Mammary epithelial cell (primary cell): ENCODE measurements at regions of chr3 and their contacts with region 1.

Region 1: DNA sequence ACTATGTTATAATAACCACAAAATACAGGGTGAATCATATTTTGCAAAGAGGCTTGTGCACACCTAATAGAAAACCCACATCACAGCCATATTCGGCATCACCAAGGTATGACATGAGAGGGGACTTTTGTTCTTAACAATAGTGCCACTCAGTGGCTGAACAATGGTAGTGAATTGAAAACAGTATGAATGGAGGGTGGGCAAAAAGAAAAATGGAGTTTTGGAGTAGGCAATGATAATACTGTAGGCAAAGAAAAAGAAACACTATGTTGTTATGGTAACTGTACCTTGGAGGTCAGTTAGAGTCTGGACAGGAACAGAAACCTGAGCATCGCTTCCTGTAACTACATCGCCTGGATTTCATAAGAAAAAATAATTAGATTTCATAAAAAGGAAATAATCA is 348.6 kb downstream of the PLCL2 start:
- DNase-seq: peak; percentile 83
- H3K4me3 ChIP-seq: no peak overlapping the region
- H3K27ac ChIP-seq: no peak overlapping the region
- H3K4me1 ChIP-seq: peaks cover 3% of the 10 kb centered on the region
- H3K27me3 ChIP-seq: no peaks in the 10 kb centered on the region
- CTCF ChIP-seq: peak; percentile 65 to 68

Region 2: GRCh38 chr3:16264708-16265454 is 968.5 kb before region 1 on chr3 and contains the starts of genes DPH3 and OXNAD1:
- CTCF ChIA-PET with region 1: no interaction called
- dilution Hi-C with region 1: no loop called
- in situ Hi-C with region 1: no loop called
- intact Hi-C with region 1: loop called (anchors 5 kb)
- DNase-seq: peak; percentile 99
- H3K4me3 ChIP-seq: peak within 1 kb of the TSS; percentile 93 to 99 (median 97)
- H3K27ac ChIP-seq: peak within 1 kb of the TSS; percentile 97
- H3K4me1 ChIP-seq: peaks cover 24% of the 10 kb centered on the region
- H3K27me3 ChIP-seq: no peaks in the 10 kb centered on the region
- CTCF ChIP-seq: no peak
- total RNA-seq, gene DPH3: 16.3 to 27.8 TPM
- total RNA-seq, gene OXNAD1: 11.3 to 13.7 TPM

Region 3: DNA sequence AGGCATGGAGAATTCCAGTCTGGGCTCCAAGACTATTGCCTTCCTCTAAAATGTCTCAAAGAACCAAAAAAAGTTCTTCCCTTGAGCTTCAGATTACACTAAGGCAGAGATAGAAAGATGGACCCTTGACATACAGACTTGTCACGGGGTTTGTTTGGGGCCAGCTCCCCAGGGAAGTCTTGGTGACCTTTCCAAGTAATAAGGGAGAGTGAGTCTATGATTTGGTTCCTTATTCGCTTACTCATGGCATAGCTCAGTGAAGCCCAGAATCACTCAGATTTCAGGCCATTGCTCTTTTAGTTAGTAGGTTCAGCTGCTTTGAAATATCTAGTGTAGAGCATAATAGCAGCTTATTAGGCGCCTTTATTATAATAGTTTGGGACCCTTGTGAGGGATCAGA is 258.3 kb before region 1 on chr3:
- CTCF ChIA-PET with region 1: no interaction called
- dilution Hi-C with region 1: no loop called
- in situ Hi-C with region 1: no loop called
- intact Hi-C with region 1: no loop called
- DNase-seq: no peak
- H3K4me3 ChIP-seq: no peak overlapping the region
- H3K27ac ChIP-seq: no peak overlapping the region
- H3K4me1 ChIP-seq: no peaks in the 10 kb centered on the region
- H3K27me3 ChIP-seq: no peaks in the 10 kb centered on the region
- CTCF ChIP-seq: no peak

Region 4: GRCh38 chr3:17032407-17033034 is 200.9 kb before region 1 on chr3:
- CTCF ChIA-PET with region 1: no interaction called
- dilution Hi-C with region 1: no loop called
- in situ Hi-C with region 1: no loop called
- intact Hi-C with region 1: loop called (anchors 1 kb)
- DNase-seq: no peak
- H3K4me3 ChIP-seq: no peak overlapping the region
- H3K27ac ChIP-seq: no peak overlapping the region
- H3K4me1 ChIP-seq: no peaks in the 10 kb centered on the region
- H3K27me3 ChIP-seq: no peaks in the 10 kb centered on the region
- CTCF ChIP-seq: peak; percentile 54 to 67